Motor neuron (in vitro differentiated cells): ENCODE measurements at regions of chr15 and their contacts with region 1.

Region 1: GRCh38 chr15:50145451-50145872 is 26.4 kb upstream of the ATP8B4 start:
- ATAC-seq: peak; percentile 76 to 93 (median 85)
- H3K4me3 ChIP-seq: no peak overlapping the region
- H3K27ac ChIP-seq: no peak overlapping the region
- H3K4me1 ChIP-seq: no peaks in the 10 kb centered on the region

Region 2: GRCh38 chr15:48352474-48353072 is 1792.9 kb before region 1 on chr15:
- in situ Hi-C with region 1: loop called in 3 of 9 experiments (anchors 25 kb)
- ATAC-seq: peak; percentile 64 to 95 (median 76)
- H3K4me3 ChIP-seq: no peak overlapping the region
- H3K27ac ChIP-seq: no peak overlapping the region
- H3K4me1 ChIP-seq: no peaks in the 10 kb centered on the region

Region 3: GRCh38 chr15:49235446-49236124 is 909.9 kb before region 1 on chr15:
- in situ Hi-C with region 1: loop called in 2 of 9 experiments (anchors 25 kb)
- ATAC-seq: peak; percentile 58 to 92 (median 81)
- H3K4me3 ChIP-seq: no peak overlapping the region
- H3K27ac ChIP-seq: no peak overlapping the region
- H3K4me1 ChIP-seq: peaks cover 0 to 5% of the 10 kb centered on the region in 2 donors

Region 4: DNA sequence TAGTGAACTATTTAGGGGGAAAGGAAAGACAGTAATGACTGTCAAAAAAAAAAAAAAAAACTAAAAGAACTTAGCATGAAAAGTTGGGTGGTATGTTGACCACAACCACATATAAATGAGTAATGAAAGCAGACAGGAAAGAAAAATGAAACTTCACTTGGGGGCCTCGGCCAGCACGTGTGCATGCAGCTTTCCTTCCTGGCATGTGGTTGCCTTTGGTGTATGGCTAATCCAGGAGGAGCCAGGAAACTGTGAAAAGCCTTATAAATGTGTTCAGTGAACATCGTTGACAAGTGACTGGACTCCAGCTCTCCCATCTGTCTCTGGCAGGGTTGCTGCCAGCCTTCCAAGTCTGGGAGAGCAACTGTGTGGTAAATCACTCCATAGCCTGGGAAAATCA is 329.5 kb before region 1 on chr15:
- in situ Hi-C with region 1: no loop called
- ATAC-seq: no peak
- H3K4me3 ChIP-seq: no peak overlapping the region
- H3K27ac ChIP-seq: no peak overlapping the region
- H3K4me1 ChIP-seq: peaks cover 0 to 3% of the 10 kb centered on the region in 2 donors

Region 5: GRCh38 chr15:49847937-49848823 is 297.3 kb before region 1 on chr15:
- in situ Hi-C with region 1: no loop called
- ATAC-seq: peak in 2 of 8 experiments; percentile 41 to 80
- H3K4me3 ChIP-seq: no peak overlapping the region
- H3K27ac ChIP-seq: no peak overlapping the region
- H3K4me1 ChIP-seq: no peaks in the 10 kb centered on the region

Region 6: GRCh38 chr15:49876401-49877038 is 268.9 kb before region 1 on chr15:
- in situ Hi-C with region 1: loop called in 1 of 9 experiments (anchors 10 kb)
- ATAC-seq: peak in 2 of 8 experiments; percentile 38 to 49
- H3K4me3 ChIP-seq: no peak overlapping the region
- H3K27ac ChIP-seq: no peak overlapping the region
- H3K4me1 ChIP-seq: no peaks in the 10 kb centered on the region

Region 7: DNA sequence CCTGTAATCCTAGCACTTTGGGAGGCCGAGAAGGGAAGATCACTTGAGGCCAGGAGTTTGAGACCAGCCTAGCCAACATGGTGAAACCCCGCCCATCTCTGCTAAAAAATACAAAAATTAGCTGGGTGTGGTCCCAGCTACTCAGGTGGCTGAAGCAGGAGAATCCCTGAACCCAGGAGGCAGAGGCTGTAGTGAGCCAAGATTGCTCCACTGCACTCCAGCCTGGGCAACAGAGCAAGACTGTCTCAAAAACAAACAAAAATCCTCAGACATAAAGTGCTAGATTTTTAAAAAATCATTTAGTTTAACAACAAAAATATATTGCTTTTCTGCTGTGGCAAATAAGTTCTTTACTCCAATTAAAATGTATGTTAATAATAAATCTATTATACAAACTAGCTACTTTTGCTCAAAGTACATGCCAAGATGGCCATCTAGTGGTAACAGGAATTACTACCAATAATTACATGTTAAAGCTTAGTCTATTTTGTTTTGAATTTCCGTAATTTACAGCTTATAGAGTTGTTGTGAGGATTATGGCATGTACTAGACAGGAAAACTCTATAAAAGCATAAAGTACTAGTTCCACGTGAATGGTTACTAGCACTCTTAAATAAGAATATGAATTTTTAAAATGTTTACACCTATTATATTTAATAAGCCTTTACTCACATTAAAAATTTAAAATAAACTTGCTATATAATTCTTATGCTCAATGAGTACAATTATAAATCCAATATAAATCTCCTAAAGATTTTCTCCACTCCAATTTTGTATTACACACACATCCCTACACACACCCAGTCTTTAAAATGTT is 170.6 kb after region 1 on chr15:
- in situ Hi-C with region 1: loop called in 1 of 9 experiments (anchors 10 kb)
- ATAC-seq: peak in 3 of 8 experiments; percentile 42 to 62 (median 52)
- H3K4me3 ChIP-seq: no peak overlapping the region
- H3K27ac ChIP-seq: no peak overlapping the region
- H3K4me1 ChIP-seq: no peaks in the 10 kb centered on the region